AG04450 (cell line): ENCODE measurements at regions of chr1 and their contacts with region 1.

Region 1: GRCh38 chr1:161792740-161793139 is 26.6 kb downstream of the ATF6 start:
- DNase-seq: peak; percentile 60
- H3K4me3 ChIP-seq: no peak overlapping the region
- H3K27ac ChIP-seq: no peak overlapping the region
- H3K27me3 ChIP-seq: no peaks in the 10 kb centered on the region
- CTCF ChIP-seq: peak; percentile 53

Region 2: GRCh38 chr1:161691846-161692245 is 100.9 kb before region 1 on chr1:
- CTCF ChIA-PET with region 1: no interaction called
- POLR2A ChIA-PET with region 1: no interaction called
- DNase-seq: no peak
- H3K4me3 ChIP-seq: no peak overlapping the region
- H3K27ac ChIP-seq: no peak overlapping the region
- H3K27me3 ChIP-seq: peaks cover 8% of the 10 kb centered on the region
- CTCF ChIP-seq: no peak

Region 3: GRCh38 chr1:161725258-161726082 is 67.3 kb before region 1 on chr1:
- CTCF ChIA-PET with region 1: no interaction called
- POLR2A ChIA-PET with region 1: no interaction called
- DNase-seq: no peak
- H3K4me3 ChIP-seq: peak overlapping the region; percentile 84
- H3K27ac ChIP-seq: peak overlapping the region; percentile 43
- H3K27me3 ChIP-seq: no peaks in the 10 kb centered on the region
- CTCF ChIP-seq: no peak

Region 4: DNA sequence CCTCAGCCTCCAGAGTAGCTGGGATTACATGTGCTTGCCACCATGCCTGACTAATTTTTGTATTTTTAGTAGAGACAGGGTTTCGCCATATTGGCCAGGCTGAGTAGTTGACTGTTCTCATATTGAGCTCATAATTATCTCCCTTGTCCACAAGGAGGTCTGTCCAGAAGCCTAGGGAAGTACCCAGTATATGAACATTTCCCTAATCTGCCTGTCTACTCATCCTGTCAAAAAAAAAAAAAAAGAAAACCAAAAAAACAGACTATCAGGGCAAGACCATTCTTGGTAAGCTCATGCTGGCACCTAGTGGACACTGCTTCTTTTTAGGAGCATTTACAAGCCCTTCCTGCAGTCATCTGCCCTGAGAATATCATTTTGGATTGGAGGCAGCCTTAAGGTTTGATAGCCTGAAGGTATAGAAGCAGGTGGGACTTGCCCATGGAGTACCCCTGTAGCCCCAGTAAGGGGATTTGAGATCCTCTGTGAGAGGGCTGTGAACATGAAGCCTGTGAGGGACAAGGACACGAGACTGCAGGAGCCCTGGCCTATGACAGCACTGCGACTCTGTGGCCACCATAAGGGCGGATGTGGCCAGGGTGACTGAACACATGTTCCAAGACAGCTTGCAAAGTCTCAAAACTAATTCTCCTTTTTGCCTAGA is 54.0 kb before region 1 on chr1:
- CTCF ChIA-PET with region 1: no interaction called
- POLR2A ChIA-PET with region 1: no interaction called
- DNase-seq: peak; percentile 55
- H3K4me3 ChIP-seq: no peak overlapping the region
- H3K27ac ChIP-seq: no peak overlapping the region
- H3K27me3 ChIP-seq: no peaks in the 10 kb centered on the region
- CTCF ChIP-seq: peak; percentile 70

Region 5: GRCh38 chr1:161816201-161816600 is 23.5 kb after region 1 on chr1:
- CTCF ChIA-PET with region 1: interaction called, 10 read pairs
- POLR2A ChIA-PET with region 1: no interaction called
- DNase-seq: no peak
- H3K4me3 ChIP-seq: no peak overlapping the region
- H3K27ac ChIP-seq: no peak overlapping the region
- H3K27me3 ChIP-seq: no peaks in the 10 kb centered on the region
- CTCF ChIP-seq: no peak

Region 6: DNA sequence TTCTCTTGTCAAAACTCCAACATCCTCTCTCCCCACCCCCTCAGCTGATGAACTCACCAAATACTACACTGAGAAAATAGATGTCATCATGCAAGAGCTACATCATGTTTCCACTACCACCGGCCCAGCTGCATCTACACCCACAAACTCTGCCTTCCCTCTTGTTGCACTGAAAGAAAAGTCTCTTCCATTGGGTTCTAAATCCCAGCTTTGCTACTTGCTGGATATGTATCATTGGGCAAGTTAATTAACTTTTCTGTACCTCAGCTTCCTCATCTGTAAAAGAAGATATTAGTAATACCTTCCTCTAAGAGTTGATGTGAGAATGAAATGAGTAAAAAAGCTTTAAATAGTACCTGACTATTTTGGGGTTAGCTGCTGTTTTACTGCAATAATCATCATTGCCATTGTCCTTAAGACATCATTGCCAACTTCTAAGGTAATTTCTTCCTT is 122.3 kb after region 1 on chr1:
- CTCF ChIA-PET with region 1: interaction called, 12 read pairs
- POLR2A ChIA-PET with region 1: no interaction called
- DNase-seq: no peak
- H3K4me3 ChIP-seq: no peak overlapping the region
- H3K27ac ChIP-seq: no peak overlapping the region
- H3K27me3 ChIP-seq: no peaks in the 10 kb centered on the region
- CTCF ChIP-seq: no peak

Region 7: GRCh38 chr1:162023547-162024501 is 231.1 kb after region 1 on chr1 and contains the start of gene OLFML2B:
- CTCF ChIA-PET with region 1: interaction called, 72 read pairs
- POLR2A ChIA-PET with region 1: interaction called, 5 read pairs
- DNase-seq: peak; percentile 37
- H3K4me3 ChIP-seq: peak within 1 kb of the TSS; percentile 82
- H3K27ac ChIP-seq: peak within 1 kb of the TSS; percentile 31
- H3K27me3 ChIP-seq: peaks cover 2% of the 10 kb centered on the region
- CTCF ChIP-seq: peak; percentile 54
- polyA plus RNA-seq, gene OLFML2B: 0.68 and 1.2 TPM in 2 replicates

Region 8: GRCh38 chr1:162046921-162047320 is 254.2 kb after region 1 on chr1:
- CTCF ChIA-PET with region 1: interaction called, 49 read pairs
- POLR2A ChIA-PET with region 1: no interaction called
- DNase-seq: no peak
- H3K4me3 ChIP-seq: no peak overlapping the region
- H3K27ac ChIP-seq: no peak overlapping the region
- H3K27me3 ChIP-seq: no peaks in the 10 kb centered on the region
- CTCF ChIP-seq: no peak